ENCODE measurements at regions of chr13 and their contacts with region 1.

Region 1: DNA sequence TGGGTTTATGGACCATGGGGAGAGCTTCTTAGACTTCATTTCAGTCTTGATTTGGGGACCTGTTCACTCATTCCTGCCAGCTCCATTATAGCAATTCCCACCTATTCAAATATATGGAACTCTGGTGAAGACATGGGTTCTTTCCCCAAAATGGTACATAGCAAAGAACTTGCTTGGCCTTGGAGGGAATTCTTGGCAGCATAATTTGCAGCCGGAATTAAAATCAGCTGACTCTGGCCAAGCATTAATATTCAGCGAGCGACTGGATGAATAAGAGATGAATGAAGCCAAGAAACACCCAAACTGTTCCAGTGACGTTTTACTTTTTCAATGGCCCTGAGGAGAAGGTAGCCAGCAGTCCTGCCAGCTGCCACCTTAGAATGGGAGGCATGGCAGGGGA is 88.4 kb upstream of the SOX1 start:
- DNase-seq: no peak
- ATAC-seq: no peak
- H3K4me3 ChIP-seq: no peak overlapping the region
- H3K27ac ChIP-seq: no peak overlapping the region
- H3K4me1 ChIP-seq: no peaks in the 10 kb centered on the region
- H3K27me3 ChIP-seq: peaks cover 3 to 30% (median 10%) of the 10 kb centered on the region in 3 donors
- CTCF ChIP-seq: no peak

Region 2: GRCh38 chr13:111900390-111901131 is 78.0 kb before region 1 on chr13:
- intact Hi-C with region 1: no loop called
- DNase-seq: no peak
- ATAC-seq: no peak
- H3K4me3 ChIP-seq: no peak overlapping the region
- H3K27ac ChIP-seq: no peak overlapping the region
- H3K4me1 ChIP-seq: no peaks in the 10 kb centered on the region
- H3K27me3 ChIP-seq: peaks cover 0 to 3% (median 3%) of the 10 kb centered on the region in 3 donors
- CTCF ChIP-seq: no peak

Region 3: GRCh38 chr13:111937777-111938311 is 40.7 kb before region 1 on chr13:
- intact Hi-C with region 1: loop called in 1 of 2 experiments (anchors 2 kb)
- DNase-seq: no peak
- ATAC-seq: no peak
- H3K4me3 ChIP-seq: no peak overlapping the region
- H3K27ac ChIP-seq: no peak overlapping the region
- H3K4me1 ChIP-seq: no peaks in the 10 kb centered on the region
- H3K27me3 ChIP-seq: no peaks in the 10 kb centered on the region
- CTCF ChIP-seq: no peak

Measured in psoas muscle (tissue), 8 donors.